ENCODE measurements at regions of chr7 and their contacts with region 1.

Region 1: GRCh38 chr7:88546808-88547207 is 212.7 kb upstream of the ZNF804B start:
- DNase-seq: peak; percentile 58
- H3K4me3 Mint-ChIP-seq: no peak overlapping the region
- H3K27ac Mint-ChIP-seq: no peak overlapping the region
- H3K4me1 Mint-ChIP-seq: no peaks in the 10 kb centered on the region
- H3K27me3 Mint-ChIP-seq: no peaks in the 10 kb centered on the region
- CTCF ChIP-seq: peak; percentile 38

Region 2: DNA sequence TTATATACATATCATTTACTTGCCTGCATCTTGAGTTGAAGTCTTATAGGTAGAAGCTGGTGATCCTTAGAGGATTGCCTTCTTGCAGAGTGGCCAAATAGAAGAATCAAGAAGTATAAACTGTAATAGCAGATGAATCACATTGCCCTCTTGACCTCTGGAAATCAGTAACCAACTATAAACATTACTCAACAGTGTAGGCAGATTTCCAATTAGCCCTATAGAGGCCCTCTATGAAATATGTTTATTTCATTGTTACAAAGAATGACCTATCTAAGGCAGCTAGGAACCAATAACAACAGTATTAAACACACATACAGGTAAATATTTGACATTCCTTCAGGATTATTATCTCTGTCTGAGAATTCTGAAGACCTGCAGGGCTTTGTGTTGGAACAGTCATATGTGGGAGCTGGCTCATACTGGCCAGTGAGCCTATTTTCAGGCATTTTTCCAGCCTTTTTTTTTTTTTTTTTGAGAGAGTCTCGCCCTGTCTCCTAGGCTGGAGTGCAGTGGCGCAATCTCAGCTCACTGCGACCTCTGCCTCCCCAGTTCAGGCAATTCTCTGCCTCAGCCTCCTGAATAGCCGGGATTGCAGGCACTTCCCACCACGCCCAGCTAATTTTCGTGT is 319.8 kb before region 1 on chr7:
- CTCF ChIA-PET with region 1: no interaction called
- intact Hi-C with region 1: no loop called
- DNase-seq: peak; percentile 55
- H3K4me3 Mint-ChIP-seq: no peak overlapping the region
- H3K27ac Mint-ChIP-seq: peak overlapping the region; percentile 39
- H3K4me1 Mint-ChIP-seq: peaks cover 15% of the 10 kb centered on the region
- H3K27me3 Mint-ChIP-seq: no peaks in the 10 kb centered on the region
- CTCF ChIP-seq: no peak

Region 3: GRCh38 chr7:88835147-88835728 is 288.4 kb after region 1 on chr7:
- CTCF ChIA-PET with region 1: interaction called, 4 read pairs
- intact Hi-C with region 1: loop called (anchors 1 kb)
- DNase-seq: peak; percentile 21
- H3K4me3 Mint-ChIP-seq: no peak overlapping the region
- H3K27ac Mint-ChIP-seq: no peak overlapping the region
- H3K4me1 Mint-ChIP-seq: no peaks in the 10 kb centered on the region
- H3K27me3 Mint-ChIP-seq: no peaks in the 10 kb centered on the region
- CTCF ChIP-seq: no peak

Measured in Calu3 (cell line).